Breast epithelium (tissue), 4 donors: ENCODE measurements at regions of chr11 and their contacts with region 1.

Region 1: GRCh38 chr11:43567396-43567975 is 113.1 kb upstream of the HSD17B12 start:
- DNase-seq: no peak
- H3K4me3 ChIP-seq: no peak overlapping the region
- H3K27ac ChIP-seq: no peak overlapping the region
- H3K4me1 ChIP-seq: no peaks in the 10 kb centered on the region
- H3K27me3 ChIP-seq: peaks cover 0 to 29% of the 10 kb centered on the region in 2 donors
- CTCF ChIP-seq: peak in 2 of 3 donors; percentile 23 to 47
- POLR2A ChIP-seq: no peak

Region 2: GRCh38 chr11:43327987-43328386 is 239.5 kb before region 1 on chr11:
- intact Hi-C with region 1: loop called (anchors 10 kb)
- DNase-seq: no peak
- H3K4me3 ChIP-seq: no peak overlapping the region
- H3K27ac ChIP-seq: no peak overlapping the region
- H3K4me1 ChIP-seq: no peaks in the 10 kb centered on the region
- H3K27me3 ChIP-seq: no peaks in the 10 kb centered on the region
- CTCF ChIP-seq: no peak
- POLR2A ChIP-seq: no peak

Region 3: DNA sequence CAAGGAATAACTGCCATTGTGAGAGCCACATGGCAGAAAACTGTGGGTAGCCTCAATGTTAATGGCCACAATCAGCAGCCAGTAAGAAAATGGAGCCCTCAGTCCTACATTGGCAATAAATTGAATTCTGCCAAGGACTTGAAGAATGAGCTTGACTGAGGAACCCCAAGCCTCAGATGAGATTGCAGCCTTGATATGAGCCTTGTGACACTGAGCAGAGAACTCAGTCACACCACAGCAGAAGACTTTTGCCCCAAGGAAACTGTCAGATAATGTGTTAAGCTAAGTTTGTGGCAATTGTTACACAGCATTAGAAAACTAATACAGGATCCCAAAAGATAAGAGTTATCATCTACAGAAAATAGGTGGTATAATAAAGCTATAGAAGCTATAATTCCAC is 211.2 kb before region 1 on chr11:
- intact Hi-C with region 1: no loop called
- DNase-seq: no peak
- H3K4me3 ChIP-seq: no peak overlapping the region
- H3K27ac ChIP-seq: no peak overlapping the region
- H3K4me1 ChIP-seq: no peaks in the 10 kb centered on the region
- H3K27me3 ChIP-seq: no peaks in the 10 kb centered on the region
- CTCF ChIP-seq: no peak
- POLR2A ChIP-seq: no peak

Region 4: DNA sequence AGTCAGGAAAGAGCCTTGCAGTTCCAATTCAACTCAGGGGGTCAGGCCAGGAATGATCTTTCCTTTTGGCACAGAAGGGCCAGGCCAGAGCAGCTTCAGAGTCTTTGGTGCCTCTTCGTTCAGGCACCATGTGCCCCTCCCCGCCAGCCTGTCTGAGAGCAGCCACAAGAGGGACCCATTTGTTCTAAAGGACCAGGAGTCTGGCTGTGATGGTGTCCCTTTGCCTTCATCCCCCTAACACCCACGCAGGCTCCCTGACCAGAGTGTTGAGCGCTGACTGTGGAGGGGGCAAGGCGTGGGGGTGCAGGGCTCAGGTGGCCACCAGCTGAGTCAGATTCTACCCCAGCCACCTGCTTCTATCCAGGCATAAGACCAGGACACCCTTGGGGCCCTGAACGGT is 52.4 kb before region 1 on chr11:
- intact Hi-C with region 1: no loop called
- DNase-seq: no peak
- H3K4me3 ChIP-seq: no peak overlapping the region
- H3K27ac ChIP-seq: no peak overlapping the region
- H3K4me1 ChIP-seq: no peaks in the 10 kb centered on the region
- H3K27me3 ChIP-seq: peaks cover 0 to 11% of the 10 kb centered on the region in 2 donors
- CTCF ChIP-seq: no peak
- POLR2A ChIP-seq: no peak